Spleen (tissue), 13 donors: ENCODE measurements at regions of chr20 and their contacts with region 1.

Region 1: GRCh38 chr20:24560571-24561491 is 91.4 kb downstream of the SYNDIG1 start:
- DNase-seq: no peak
- H3K4me3 ChIP-seq: no peak overlapping the region
- H3K27ac ChIP-seq: no peak overlapping the region
- H3K4me1 ChIP-seq: no peaks in the 10 kb centered on the region
- H3K27me3 ChIP-seq: peaks cover 0 to 22% (median 0%) of the 10 kb centered on the region in 7 donors
- CTCF ChIP-seq: no peak
- POLR2A ChIP-seq: no peak

Region 2: GRCh38 chr20:23794065-23794464 is 766.8 kb before region 1 on chr20:
- intact Hi-C with region 1: no loop called
- DNase-seq: no peak
- H3K4me3 ChIP-seq: no peak overlapping the region
- H3K27ac ChIP-seq: no peak overlapping the region
- H3K4me1 ChIP-seq: no peaks in the 10 kb centered on the region
- H3K27me3 ChIP-seq: peaks cover 0 to 13% (median 0%) of the 10 kb centered on the region in 7 donors
- CTCF ChIP-seq: no peak
- POLR2A ChIP-seq: no peak

Region 3: DNA sequence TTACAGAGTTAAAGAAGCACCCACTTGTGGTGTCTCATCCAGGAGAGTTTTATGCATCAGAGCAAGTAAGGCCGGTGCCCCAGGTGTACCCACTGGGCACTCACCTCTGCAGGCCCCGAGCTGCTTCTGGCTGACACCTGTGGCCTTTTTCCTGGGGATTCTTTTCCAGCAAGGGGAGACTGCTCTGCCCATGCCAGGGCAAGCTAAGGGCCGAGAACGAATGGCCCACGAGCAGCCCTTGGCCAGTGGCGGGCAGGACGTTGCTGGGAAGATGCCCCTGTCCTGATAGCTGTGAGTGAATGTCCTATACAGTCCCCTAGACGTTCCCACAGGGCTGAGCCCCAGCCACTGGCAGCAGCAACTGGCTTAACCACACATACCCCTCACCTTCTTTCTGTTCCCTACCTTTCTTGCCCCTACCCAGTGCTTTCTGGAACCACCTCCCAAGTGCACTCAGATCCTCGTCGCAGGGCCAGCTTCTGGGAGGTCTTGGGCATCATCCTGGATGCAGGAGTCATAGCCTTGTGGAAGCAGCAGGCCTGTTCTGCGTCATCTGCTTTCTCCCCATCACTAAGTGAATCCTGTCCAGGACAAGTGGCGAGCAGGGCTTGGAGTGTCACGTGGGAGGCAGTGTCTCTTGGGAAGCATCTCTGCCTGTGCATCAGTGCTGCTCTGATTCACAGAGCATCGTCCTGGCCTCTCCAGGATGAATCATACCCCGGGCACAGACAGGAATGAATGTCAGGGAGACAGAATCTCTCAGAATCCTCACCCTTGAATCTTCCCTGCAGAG is 58.9 kb before region 1 on chr20:
- intact Hi-C with region 1: loop called (anchors 10 kb)
- DNase-seq: peak; percentile 55
- H3K4me3 ChIP-seq: no peak overlapping the region
- H3K27ac ChIP-seq: no peak overlapping the region
- H3K4me1 ChIP-seq: no peaks in the 10 kb centered on the region
- H3K27me3 ChIP-seq: peaks cover 0 to 12% (median 0%) of the 10 kb centered on the region in 7 donors
- CTCF ChIP-seq: no peak
- POLR2A ChIP-seq: no peak